ENCODE measurements at regions of chr22 and their contacts with region 1.

Region 1: DNA sequence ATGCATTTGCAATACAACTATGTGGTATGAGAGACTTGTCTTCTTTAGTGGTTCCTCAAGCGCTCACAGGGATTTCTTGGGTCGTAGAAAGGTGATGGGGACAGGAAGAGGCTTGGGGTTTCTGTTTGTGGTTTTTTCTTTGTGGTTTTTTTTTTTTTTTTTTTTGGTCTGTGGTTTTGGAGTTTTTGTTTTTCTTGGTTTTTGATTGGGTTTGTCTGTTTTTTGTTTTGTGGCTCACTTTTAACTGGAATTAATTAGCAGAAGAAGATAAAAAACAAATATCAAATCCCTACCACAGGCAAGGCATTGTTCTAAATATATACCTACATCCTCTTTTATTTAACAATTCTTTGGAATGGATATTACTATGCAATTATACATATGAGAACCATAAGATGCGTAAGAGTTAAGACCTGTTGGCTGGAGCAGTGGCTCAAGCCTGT is 5.5 kb downstream of the TTC28 start:
- DNase-seq: peak in 1 of 2 donors; percentile 83
- ATAC-seq: peak; percentile 80 to 98 (median 91)
- H3K4me3 ChIP-seq: no peak overlapping the region
- H3K4me3 Mint-ChIP-seq: peak overlapping the region; percentile 92
- H3K27ac ChIP-seq: no peak overlapping the region
- H3K27ac Mint-ChIP-seq: peak overlapping the region; percentile 96 to 97
- H3K4me1 ChIP-seq: peaks cover 15% of the 10 kb centered on the region
- H3K4me1 Mint-ChIP-seq: peaks cover 26 to 28% of the 10 kb centered on the region in 2 donors
- H3K27me3 ChIP-seq: peaks cover 55% of the 10 kb centered on the region
- H3K27me3 Mint-ChIP-seq: peaks cover 41 to 60% of the 10 kb centered on the region in 2 donors
- CTCF ChIP-seq: no peak

Region 2: GRCh38 chr22:28594797-28595462 is 79.2 kb before region 1 on chr22:
- intact Hi-C with region 1: no loop called
- DNase-seq: peak in 1 of 2 donors; percentile 60
- ATAC-seq: peak; percentile 67 to 78 (median 68)
- H3K4me3 ChIP-seq: no peak overlapping the region
- H3K4me3 Mint-ChIP-seq: no peak overlapping the region
- H3K27ac ChIP-seq: no peak overlapping the region
- H3K27ac Mint-ChIP-seq: no peak overlapping the region
- H3K4me1 ChIP-seq: no peaks in the 10 kb centered on the region
- H3K4me1 Mint-ChIP-seq: no peaks in the 10 kb centered on the region
- H3K27me3 ChIP-seq: peaks cover 5% of the 10 kb centered on the region
- H3K27me3 Mint-ChIP-seq: peaks cover 0 to 5% of the 10 kb centered on the region in 2 donors
- CTCF ChIP-seq: peak; percentile 81

Region 3: DNA sequence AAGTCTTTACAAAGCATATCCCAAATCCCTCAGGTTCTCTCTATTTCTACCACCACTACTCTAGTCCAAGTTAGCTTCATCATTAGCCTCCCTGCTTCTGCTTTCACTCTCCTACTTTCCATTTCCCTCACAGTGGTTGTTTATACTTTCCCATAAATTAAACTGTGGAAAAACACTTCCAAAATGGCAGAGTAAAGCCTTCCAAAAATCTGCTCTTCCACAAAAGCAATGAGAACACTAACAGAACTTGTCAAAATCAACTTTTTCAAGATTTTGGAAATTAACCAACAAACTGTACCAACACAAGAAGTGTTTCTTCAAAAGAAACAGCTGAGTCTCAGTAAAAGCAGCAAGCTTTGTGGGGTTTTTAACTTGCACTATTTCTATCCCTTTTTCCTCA is 66.3 kb before region 1 on chr22:
- intact Hi-C with region 1: no loop called
- DNase-seq: no peak
- ATAC-seq: no peak
- H3K4me3 ChIP-seq: no peak overlapping the region
- H3K4me3 Mint-ChIP-seq: no peak overlapping the region
- H3K27ac ChIP-seq: no peak overlapping the region
- H3K27ac Mint-ChIP-seq: no peak overlapping the region
- H3K4me1 ChIP-seq: no peaks in the 10 kb centered on the region
- H3K4me1 Mint-ChIP-seq: no peaks in the 10 kb centered on the region
- H3K27me3 ChIP-seq: peaks cover 5% of the 10 kb centered on the region
- H3K27me3 Mint-ChIP-seq: peaks cover 34 to 58% of the 10 kb centered on the region in 2 donors
- CTCF ChIP-seq: no peak

Region 4: DNA sequence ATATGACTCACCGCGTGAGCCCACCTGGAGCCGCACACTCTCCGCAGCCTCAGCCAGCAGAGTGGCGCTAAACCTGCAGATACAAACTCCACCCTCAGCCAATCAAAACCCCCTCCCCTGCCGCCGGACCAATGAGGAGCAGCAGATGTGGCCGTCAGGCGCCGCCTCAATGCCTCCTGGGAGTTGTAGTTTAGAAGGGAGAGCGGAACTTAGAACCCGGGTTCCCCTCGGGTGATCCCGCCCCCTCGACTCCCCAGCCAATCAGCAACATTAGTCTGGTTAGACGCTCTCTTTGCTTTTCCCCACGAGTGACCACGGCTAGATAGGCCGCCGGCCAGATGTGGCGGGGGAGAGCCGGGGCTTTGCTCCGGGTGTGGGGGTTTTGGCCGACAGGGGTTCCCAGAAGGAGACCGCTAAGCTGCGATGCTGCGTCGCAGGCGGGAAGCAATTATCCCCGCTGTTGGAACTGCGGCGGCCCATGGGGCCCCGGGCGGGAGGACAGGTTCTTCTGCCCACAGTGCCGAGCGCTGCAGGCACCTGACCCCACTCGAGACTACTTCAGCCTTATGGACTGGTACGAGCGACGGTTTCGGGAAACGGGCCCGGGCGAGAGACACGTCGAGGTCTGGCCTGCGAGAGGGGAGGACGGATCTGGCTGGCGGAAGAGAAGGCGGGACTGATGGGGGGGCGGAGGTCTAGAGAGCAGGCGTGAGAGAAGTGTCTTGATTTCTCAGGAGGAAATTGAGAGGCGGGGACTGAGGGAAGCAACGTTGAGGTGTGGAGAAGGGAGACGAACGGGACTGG is 67.8 kb after region 1 on chr22 and contains the starts of genes CHEK2 and HSCB:
- intact Hi-C with region 1: loop called (anchors 5 kb)
- DNase-seq: peak; percentile 91 to 98
- ATAC-seq: peak; percentile 94 to 98 (median 95)
- H3K4me3 ChIP-seq: peak within 1 kb of the TSS; percentile 74
- H3K4me3 Mint-ChIP-seq: peak within 1 kb of the TSS; percentile 89
- H3K27ac ChIP-seq: peak within 1 kb of the TSS; percentile 91
- H3K27ac Mint-ChIP-seq: peak within 1 kb of the TSS; percentile 92 to 97
- H3K4me1 ChIP-seq: peaks cover 22% of the 10 kb centered on the region
- H3K4me1 Mint-ChIP-seq: peaks cover 32 to 33% of the 10 kb centered on the region in 2 donors
- H3K27me3 ChIP-seq: no peaks in the 10 kb centered on the region
- H3K27me3 Mint-ChIP-seq: no peaks in the 10 kb centered on the region
- CTCF ChIP-seq: no peak
- total RNA-seq, gene CHEK2: 10.4 to 11.8 (median 11.4) TPM
- total RNA-seq, gene HSCB: 11.4 to 13.6 (median 12.3) TPM

Region 5: DNA sequence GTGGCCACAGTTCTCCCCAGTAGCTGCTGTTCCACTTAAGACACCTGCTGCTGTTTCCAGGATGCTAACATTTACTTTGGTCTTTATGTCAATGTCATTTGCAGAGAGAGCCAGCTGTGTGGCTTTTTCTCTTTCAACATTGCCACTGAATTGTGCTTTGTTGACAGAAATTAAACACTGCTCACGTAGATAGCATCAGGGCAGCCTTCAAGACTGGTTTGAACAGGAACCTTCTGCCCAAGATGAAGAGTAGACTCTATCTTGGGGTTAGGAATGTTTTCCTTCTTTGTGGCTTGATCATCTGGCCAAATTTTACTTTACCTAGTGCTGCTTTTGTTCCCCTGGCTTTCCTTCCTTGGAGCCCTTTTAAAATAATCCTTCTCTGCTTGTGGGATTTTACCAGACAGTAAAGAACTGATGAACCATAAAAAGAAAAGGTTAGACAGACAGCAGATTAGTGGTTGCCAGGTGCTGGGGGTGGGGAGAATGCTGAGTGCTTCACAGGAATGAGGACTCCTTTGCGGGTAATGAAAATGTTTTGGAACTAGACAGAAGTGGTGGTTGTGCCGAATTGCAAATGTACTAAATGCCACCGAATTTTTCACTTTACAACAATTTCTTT is 148.9 kb after region 1 on chr22:
- intact Hi-C with region 1: no loop called
- DNase-seq: peak in 1 of 2 donors; percentile 68
- ATAC-seq: peak; percentile 36 to 53 (median 49)
- H3K4me3 ChIP-seq: no peak overlapping the region
- H3K4me3 Mint-ChIP-seq: peak overlapping the region; percentile 13
- H3K27ac ChIP-seq: peak overlapping the region; percentile 20
- H3K27ac Mint-ChIP-seq: peak overlapping the region; percentile 74 to 84
- H3K4me1 ChIP-seq: peaks cover 52% of the 10 kb centered on the region
- H3K4me1 Mint-ChIP-seq: peaks cover 43 to 52% of the 10 kb centered on the region in 2 donors
- H3K27me3 ChIP-seq: no peaks in the 10 kb centered on the region
- H3K27me3 Mint-ChIP-seq: no peaks in the 10 kb centered on the region
- CTCF ChIP-seq: no peak